ENCODE measurements at regions of chr3 and their contacts with region 1.

Region 1: DNA sequence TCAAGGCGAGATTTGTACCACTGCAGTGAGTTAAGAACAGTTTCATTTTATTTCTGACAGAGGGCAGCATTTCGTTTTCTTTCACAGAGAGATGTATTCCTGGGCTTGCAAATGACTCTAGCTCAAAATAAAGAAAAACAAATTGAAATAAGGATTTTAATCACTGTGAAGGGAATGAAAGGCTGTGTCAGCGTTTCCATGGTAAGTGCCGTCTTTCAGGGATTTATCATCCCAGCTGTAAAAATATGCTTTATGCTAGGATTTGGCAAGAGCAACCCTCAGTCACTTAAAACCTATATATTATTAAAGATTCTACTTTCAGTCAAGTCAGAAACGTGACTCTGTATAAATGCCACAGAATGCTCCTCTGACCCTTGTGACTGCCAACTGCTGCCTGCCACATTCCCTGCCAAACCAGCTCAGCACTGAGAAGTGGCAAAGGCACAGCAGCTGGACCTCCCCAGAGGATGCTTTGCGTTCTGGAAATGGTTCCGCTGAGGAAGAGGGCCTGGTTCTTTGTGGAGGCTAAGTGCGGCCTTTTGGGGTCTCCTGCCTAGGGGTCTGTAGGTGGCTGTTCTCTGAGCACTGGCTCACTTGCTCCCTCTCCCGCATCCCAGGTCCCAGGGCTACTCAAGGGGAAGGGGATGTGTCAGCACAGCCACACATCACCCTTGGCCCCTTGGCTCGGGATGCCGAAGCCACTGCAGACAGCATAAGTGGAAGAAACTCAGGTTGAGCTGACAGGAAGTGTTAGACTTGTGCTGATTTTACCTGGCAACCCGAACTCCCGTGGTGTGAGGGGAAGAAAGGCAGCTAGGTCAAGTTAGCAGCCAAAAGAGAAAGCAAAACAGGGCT is 56.6 kb upstream of the POMGNT2 start:
- ATAC-seq: peak; percentile 70 to 91 (median 80)
- H3K4me3 ChIP-seq: no peak overlapping the region
- H3K27ac ChIP-seq: no peak overlapping the region
- H3K4me1 ChIP-seq: peaks cover 0 to 4% of the 10 kb centered on the region in 2 donors

Region 2: GRCh38 chr3:43286115-43286840 is 123.8 kb after region 1 on chr3 and contains the start of gene SNRK:
- in situ Hi-C with region 1: no loop called
- ATAC-seq: peak; percentile 69 to 92 (median 90)
- H3K4me3 ChIP-seq: peak within 1 kb of the TSS; percentile 70 to 96 (median 72)
- H3K27ac ChIP-seq: peak within 1 kb of the TSS; percentile 74 to 86
- H3K4me1 ChIP-seq: peaks cover 11% of the 10 kb centered on the region in 2 donors
- total RNA-seq, gene SNRK: 15.2 to 58.3 (median 25.5) TPM

Region 3: GRCh38 chr3:43363621-43364266 is 201.3 kb after region 1 on chr3:
- in situ Hi-C with region 1: no loop called
- ATAC-seq: peak in 5 of 8 experiments; percentile 12 to 74 (median 34)
- H3K4me3 ChIP-seq: no peak overlapping the region
- H3K27ac ChIP-seq: no peak overlapping the region
- H3K4me1 ChIP-seq: no peaks in the 10 kb centered on the region

Region 4: GRCh38 chr3:43477600-43477999 is 315.1 kb after region 1 on chr3:
- in situ Hi-C with region 1: loop called in 1 of 9 experiments (anchors 25 kb)
- ATAC-seq: no peak
- H3K4me3 ChIP-seq: no peak overlapping the region
- H3K27ac ChIP-seq: no peak overlapping the region
- H3K4me1 ChIP-seq: peaks cover 3 to 12% of the 10 kb centered on the region in 2 donors

Region 5: GRCh38 chr3:43503067-43503728 is 340.7 kb after region 1 on chr3:
- in situ Hi-C with region 1: loop called in 3 of 9 experiments (anchors 25 kb)
- ATAC-seq: peak in 6 of 8 experiments; percentile 25 to 78 (median 54)
- H3K4me3 ChIP-seq: no peak overlapping the region
- H3K27ac ChIP-seq: no peak overlapping the region
- H3K4me1 ChIP-seq: no peaks in the 10 kb centered on the region

Measured in motor neuron (in vitro differentiated cells).